K562 (cell line): ENCODE measurements at regions of chr3 and their contacts with region 1.

Region 1: DNA sequence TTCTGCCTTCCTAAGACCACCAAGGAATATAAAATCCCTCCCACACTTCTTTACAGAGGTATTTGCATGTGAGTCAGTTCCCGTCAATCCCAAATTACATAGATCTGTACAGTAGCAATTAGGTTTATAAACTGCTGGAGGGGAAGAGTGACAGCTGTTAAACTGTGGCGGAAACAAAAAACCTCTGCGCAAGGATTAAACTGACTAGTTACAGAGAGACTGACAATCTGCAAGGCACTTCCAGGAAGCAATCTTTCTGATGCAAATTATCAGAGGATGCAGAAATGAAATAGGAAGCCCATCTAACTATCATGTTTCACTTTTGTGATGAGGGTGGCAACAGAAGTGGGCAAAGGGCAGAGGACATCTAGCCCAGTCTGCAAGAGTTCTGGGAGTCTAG is 150.4 kb downstream of the RTP4 start:
- DNase-seq: no peak
- ATAC-seq: 0 out of 3 replicates have a peak, but pooled peaks have one; percentile 26
- H3K4me3 ChIP-seq: no peak overlapping the region
- H3K27ac ChIP-seq: no peak overlapping the region
- H3K4me1 ChIP-seq: peaks cover 7 to 15% of the 10 kb centered on the region in 2 experiments
- H3K27me3 ChIP-seq: no peaks in the 10 kb centered on the region
- CTCF ChIP-seq: no peak
- EP300 ChIP-seq: no peak
- POLR2A ChIP-seq: no peak
- RAD21 ChIP-seq: no peak

Region 2: GRCh38 chr3:187497052-187497451 is 21.6 kb before region 1 on chr3:
- CTCF ChIA-PET with region 1: no interaction called
- POLR2A ChIA-PET with region 1: no interaction called
- in situ Hi-C with region 1: no loop called
- intact Hi-C with region 1: loop called (anchors 1 kb)
- DNase-seq: no peak
- ATAC-seq: no peak
- H3K4me3 ChIP-seq: no peak overlapping the region
- H3K27ac ChIP-seq: no peak overlapping the region
- H3K4me1 ChIP-seq: no peaks in the 10 kb centered on the region
- H3K27me3 ChIP-seq: no peaks in the 10 kb centered on the region
- CTCF ChIP-seq: no peak
- EP300 ChIP-seq: no peak
- POLR2A ChIP-seq: no peak
- RAD21 ChIP-seq: no peak

Region 3: GRCh38 chr3:187567661-187568121 is 49.1 kb after region 1 on chr3:
- CTCF ChIA-PET with region 1: no interaction called
- POLR2A ChIA-PET with region 1: no interaction called
- in situ Hi-C with region 1: no loop called
- intact Hi-C with region 1: no loop called
- DNase-seq: no peak
- ATAC-seq: no peak
- H3K4me3 ChIP-seq: no peak overlapping the region
- H3K27ac ChIP-seq: no peak overlapping the region
- H3K4me1 ChIP-seq: no peaks in the 10 kb centered on the region
- H3K27me3 ChIP-seq: peaks cover 5 to 6% of the 10 kb centered on the region in 2 experiments; a peak in 2 of 5 replicates
- CTCF ChIP-seq: no peak
- EP300 ChIP-seq: no peak
- POLR2A ChIP-seq: no peak
- RAD21 ChIP-seq: no peak